Activated naive CD4-positive, alpha-beta T cell treated with anti-CD3 and anti-CD28 coated beads for 36 hours (primary cell): ENCODE measurements at regions of chr6 and their contacts with region 1.

Region 1: DNA sequence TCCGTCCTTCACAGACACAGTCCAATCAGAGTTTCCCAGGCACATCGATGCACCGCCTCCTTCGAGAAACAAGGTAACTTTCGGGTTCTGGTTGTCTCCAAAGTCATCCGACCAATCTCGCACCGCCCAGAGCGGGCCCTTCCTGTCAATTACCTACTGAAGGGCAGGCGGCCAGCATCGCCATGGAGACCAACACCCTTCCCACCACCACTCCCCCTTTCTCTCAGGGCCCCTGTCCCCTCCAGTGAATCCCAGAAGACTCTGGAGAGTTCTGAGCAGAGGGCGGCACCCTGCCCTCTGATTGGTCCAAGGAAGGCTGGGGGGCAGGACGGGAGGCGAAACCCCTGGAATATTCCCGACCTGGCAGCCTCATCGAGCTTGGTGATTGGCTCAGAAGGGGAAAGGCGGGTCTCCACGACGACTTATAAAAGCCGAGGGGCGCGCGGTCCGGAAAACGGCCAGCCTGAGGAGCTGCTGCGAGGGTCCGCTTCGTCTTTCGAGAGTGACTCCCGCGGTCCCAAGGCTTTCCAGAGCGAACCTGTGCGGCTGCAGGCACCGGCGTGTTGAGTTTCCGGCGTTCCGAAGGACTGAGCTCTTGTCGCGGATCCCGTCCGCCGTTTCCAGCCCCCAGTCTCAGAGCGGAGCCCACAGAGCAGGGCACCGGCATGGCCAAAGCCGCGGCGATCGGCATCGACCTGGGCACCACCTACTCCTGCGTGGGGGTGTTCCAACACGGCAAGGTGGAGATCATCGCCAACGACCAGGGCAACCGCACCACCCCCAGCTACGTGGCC is at the start of gene HSPA1B:
- DNase-seq: peak; percentile 98
- H3K4me3 Mint-ChIP-seq: peak within 1 kb of the TSS; percentile 85
- H3K27ac Mint-ChIP-seq: peak within 1 kb of the TSS; percentile 97
- H3K4me1 Mint-ChIP-seq: peaks cover 46% of the 10 kb centered on the region
- H3K27me3 Mint-ChIP-seq: no peaks in the 10 kb centered on the region
- total RNA-seq, gene HSPA1B: 47.8 to 50.1 TPM

Region 2: GRCh38 chr6:31680840-31681671 is 146.4 kb before region 1 on chr6 and contains the start of gene LY6G5C:
- CTCF ChIA-PET with region 1: interaction called, 6 read pairs
- intact Hi-C with region 1: loop called (anchors 2 kb)
- DNase-seq: peak; percentile 85
- H3K4me3 Mint-ChIP-seq: peak within 1 kb of the TSS; percentile 74
- H3K27ac Mint-ChIP-seq: no peak within 1 kb of the TSS
- H3K4me1 Mint-ChIP-seq: peaks cover 11% of the 10 kb centered on the region
- H3K27me3 Mint-ChIP-seq: no peaks in the 10 kb centered on the region
- total RNA-seq, gene LY6G5C: 0.93 to 1.4 TPM

Region 3: GRCh38 chr6:31776989-31777666 is 50.4 kb before region 1 on chr6 and contains the start of gene VWA7:
- CTCF ChIA-PET with region 1: interaction called, 3 read pairs
- intact Hi-C with region 1: loop called (anchors 2 kb)
- DNase-seq: peak; percentile 80
- H3K4me3 Mint-ChIP-seq: no peak within 1 kb of the TSS
- H3K27ac Mint-ChIP-seq: peak within 1 kb of the TSS; percentile 63
- H3K4me1 Mint-ChIP-seq: peaks cover 35% of the 10 kb centered on the region
- H3K27me3 Mint-ChIP-seq: no peaks in the 10 kb centered on the region
- total RNA-seq, gene VWA7: 0.69 to 0.89 TPM

Region 4: DNA sequence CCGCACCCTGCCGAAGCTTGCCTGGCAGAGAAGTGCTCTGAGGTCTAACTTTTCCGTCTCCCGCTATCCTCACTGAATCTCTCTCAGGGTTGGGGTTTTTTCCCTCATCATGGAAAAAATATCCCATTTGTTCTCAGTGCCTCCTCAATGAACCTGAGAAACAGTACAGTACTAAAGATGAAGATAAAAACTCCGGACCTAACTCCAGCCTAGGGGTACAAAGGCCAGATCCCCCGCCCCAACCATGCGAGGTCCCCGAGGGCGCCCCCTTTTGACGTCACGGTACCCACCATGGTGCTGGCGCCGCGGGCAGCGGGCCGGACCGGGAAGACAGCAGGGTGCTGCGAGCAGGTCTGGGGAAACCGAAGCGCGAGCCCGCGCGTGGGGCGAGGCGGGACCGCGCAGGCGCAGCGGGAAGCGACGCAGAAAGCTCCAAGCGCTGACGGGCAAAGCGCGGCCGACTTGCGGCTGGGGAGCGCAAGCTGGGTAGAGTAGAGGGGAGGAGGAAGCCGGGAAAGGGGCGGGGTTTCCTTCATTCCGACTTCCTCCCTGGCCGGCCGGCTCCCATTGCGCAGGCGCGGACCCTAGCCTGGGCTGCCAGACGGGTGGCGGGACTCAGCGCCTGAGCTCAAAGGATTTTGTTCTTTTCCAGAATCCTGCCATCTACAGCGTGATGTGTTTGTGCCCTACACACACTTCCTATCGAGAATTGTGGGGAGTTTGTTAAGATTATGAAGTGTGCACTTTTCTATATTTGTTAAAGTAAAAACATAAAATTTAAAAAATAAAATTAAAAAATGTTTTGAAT is 20.8 kb before region 1 on chr6 and contains the start of gene LSM2:
- CTCF ChIA-PET with region 1: interaction called, 14 read pairs
- intact Hi-C with region 1: loop called (anchors 1 kb)
- DNase-seq: peak; percentile 98
- H3K4me3 Mint-ChIP-seq: peak within 1 kb of the TSS; percentile 94
- H3K27ac Mint-ChIP-seq: peak within 1 kb of the TSS; percentile 86
- H3K4me1 Mint-ChIP-seq: peaks cover 22% of the 10 kb centered on the region
- H3K27me3 Mint-ChIP-seq: no peaks in the 10 kb centered on the region
- total RNA-seq, gene LSM2: 172 to 174 TPM

Region 5: DNA sequence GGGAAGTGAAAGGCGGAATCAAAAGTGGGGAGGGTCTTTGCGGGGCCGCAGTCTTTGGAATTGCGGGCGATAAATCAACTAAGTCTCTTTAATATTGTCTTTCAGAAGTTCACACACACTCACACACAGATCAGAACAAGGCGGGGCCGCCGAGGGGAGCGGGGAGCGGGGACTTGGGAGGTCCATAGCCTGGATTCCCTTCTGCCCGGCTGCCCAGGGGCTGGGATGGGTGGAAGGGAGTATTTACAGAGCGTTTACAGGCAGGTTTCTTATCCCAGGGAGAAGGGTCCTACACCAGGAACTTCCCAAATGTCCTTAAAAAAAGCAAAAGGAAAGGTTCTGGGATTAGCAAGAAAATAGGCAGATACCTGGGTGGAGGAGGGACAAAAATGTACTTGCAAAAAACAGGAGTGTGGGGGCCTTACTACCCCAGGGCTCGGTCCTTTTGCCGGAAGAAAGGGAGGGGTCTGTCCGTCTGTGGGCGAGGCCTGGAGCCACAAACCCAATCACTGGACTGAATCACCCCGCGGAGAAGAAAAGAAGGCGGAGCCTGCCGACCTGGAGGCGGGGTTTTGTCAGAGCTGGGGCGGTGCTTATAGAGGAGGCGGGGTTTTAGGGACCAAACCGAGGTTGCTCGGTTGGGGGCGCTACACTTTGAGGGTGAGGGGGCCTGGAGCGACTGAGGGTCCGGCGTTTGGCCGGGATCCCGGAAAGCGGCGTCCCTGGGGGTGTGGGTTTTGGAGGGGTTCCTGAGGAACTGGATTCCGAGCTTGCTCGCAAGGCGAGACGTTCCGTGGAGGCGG is 321.0 kb after region 1 on chr6:
- CTCF ChIA-PET with region 1: no interaction called
- intact Hi-C with region 1: no loop called
- DNase-seq: peak; percentile 89
- H3K4me3 Mint-ChIP-seq: peak overlapping the region; percentile 76
- H3K27ac Mint-ChIP-seq: peak overlapping the region; percentile 28
- H3K4me1 Mint-ChIP-seq: peaks cover 44% of the 10 kb centered on the region
- H3K27me3 Mint-ChIP-seq: peaks cover 8% of the 10 kb centered on the region